HepG2 (cell line): ENCODE measurements at regions of chr19 and their contacts with region 1.

Region 1: DNA sequence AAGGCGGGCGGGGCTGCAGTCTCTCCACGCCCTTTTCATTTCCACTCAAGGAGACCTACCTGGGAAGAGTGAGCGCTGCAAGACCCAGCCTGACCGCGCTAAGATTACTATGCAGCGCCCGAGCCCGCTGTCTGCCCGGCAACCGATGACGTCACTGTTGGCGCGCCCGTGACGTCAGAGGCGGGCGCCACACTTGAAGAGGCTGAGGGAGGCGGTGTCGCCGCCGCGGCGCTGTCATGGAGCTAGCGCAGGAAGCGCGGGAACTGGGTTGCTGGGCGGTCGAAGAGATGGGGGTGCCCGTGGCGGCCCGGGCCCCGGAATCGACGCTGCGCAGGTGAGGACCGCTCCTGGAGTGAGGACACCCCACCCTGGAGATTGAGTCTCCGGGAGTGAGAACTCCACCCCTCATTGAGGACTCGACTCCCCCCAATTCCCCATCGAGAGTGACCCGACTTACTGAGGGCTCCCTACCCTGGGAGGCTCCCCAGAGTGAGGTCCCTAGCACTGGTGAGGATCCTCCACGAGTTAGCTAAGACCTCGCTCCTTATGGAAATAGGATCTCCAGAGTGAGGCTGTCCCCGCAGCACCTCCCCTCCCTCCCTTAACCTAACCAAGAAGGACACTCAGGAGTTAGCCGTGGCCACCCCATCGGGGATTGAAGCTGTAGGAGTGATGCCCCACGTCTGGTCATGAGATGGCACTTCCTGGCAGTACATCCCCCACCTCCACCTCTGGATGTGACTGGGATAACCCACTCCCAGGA is at the start of gene HAUS5:
- DNase-seq: peak; percentile 83
- ATAC-seq: peak; percentile 91
- H3K4me3 ChIP-seq: peak within 1 kb of the TSS; percentile 64 to 80 (median 67)
- H3K27ac ChIP-seq: peak within 1 kb of the TSS; percentile 53
- H3K4me1 ChIP-seq: peaks cover 24% of the 10 kb centered on the region
- H3K27me3 ChIP-seq: no peaks in the 10 kb centered on the region; a peak in 1 of 5 replicates
- CTCF ChIP-seq: peak; percentile 49
- EP300 ChIP-seq: peak in 1 of 2 experiments; percentile 55; a peak in 1 of 4 replicates
- POLR2A ChIP-seq: peak; percentile 57 to 69; a peak in 2 of 4 replicates
- RAD21 ChIP-seq: peak; percentile 41; the same call in 1 of the 2 replicates
- total RNA-seq, gene HAUS5: 9.2 and 17.7 TPM in 2 replicates

Region 2: GRCh38 chr19:35495107-35496064 is 117.4 kb before region 1 on chr19:
- CTCF ChIA-PET with region 1: no interaction called
- POLR2A ChIA-PET with region 1: no interaction called
- in situ Hi-C with region 1: no loop called
- intact Hi-C with region 1: no loop called
- DNase-seq: peak; percentile 54
- ATAC-seq: peak; percentile 93
- H3K4me3 ChIP-seq: peak overlapping the region; percentile 25 to 66 (median 44); a peak in 4 of 6 replicates
- H3K27ac ChIP-seq: no peak overlapping the region
- H3K4me1 ChIP-seq: peaks cover 15% of the 10 kb centered on the region
- H3K27me3 ChIP-seq: no peaks in the 10 kb centered on the region
- CTCF ChIP-seq: peak; percentile 98
- EP300 ChIP-seq: no peak
- POLR2A ChIP-seq: no peak
- RAD21 ChIP-seq: peak; percentile 91

Region 3: DNA sequence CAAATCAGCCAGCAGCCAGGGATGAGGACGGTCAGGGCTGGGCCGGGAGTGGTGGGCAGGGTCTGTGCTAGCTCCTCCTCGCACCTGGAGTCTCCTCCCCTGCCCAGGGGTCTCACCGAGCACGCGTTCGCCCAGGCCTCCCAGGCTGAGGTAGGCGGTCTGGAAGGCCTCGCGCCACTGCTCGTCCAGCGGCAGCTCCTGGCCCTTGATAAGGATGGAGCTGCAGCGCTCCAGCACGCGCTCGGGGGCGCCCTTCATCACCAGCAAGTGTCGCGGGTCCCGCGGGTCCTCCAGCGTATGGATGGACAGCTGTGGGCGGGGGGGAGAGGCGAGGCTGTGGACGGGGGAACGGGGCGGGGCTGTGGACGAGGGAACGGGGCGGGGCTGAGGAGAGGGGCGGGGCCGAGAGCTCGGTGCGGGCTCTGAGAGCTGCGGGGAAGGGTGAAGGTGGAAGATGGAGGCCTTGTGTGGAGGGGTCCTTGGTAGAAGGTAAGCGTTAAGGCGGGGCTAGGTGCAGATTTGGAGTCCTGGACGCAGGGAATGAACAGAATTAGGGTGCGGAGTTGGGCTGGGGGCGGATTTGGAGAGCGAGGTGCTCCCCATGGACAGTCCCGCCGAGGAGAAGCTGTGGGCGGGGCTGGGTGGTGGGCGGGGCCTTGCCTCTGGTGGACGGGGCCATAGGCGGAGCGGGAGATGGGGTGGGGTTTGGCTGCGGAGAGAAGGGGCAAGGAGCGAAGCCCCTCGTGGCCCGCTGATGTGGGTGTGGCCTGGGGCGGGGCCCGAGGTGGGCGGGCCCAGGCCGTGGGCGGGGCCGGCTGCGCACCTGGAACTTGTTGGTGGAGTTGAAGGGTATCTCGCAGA is 55.0 kb before region 1 on chr19:
- CTCF ChIA-PET with region 1: no interaction called
- POLR2A ChIA-PET with region 1: no interaction called
- in situ Hi-C with region 1: no loop called
- intact Hi-C with region 1: loop called (anchors 10 kb)
- DNase-seq: no peak
- ATAC-seq: peak; percentile 46
- H3K4me3 ChIP-seq: peak overlapping the region in 2 of 3 experiments; percentile 36 to 56; a peak in 3 of 6 replicates
- H3K27ac ChIP-seq: no peak overlapping the region
- H3K4me1 ChIP-seq: peaks cover 33% of the 10 kb centered on the region
- H3K27me3 ChIP-seq: peaks cover 1 to 54% of the 10 kb centered on the region in 2 experiments; a peak in 3 of 5 replicates
- CTCF ChIP-seq: peak; percentile 63
- EP300 ChIP-seq: no peak
- POLR2A ChIP-seq: no peak
- RAD21 ChIP-seq: no peak